Caco-2 (cell line): ENCODE measurements at regions of chr7 and their contacts with region 1.

Region 1: GRCh38 chr7:136000288-136000913 is 23.2 kb upstream of the MTPN start:
- DNase-seq: peak; percentile 52 to 67
- H3K4me3 ChIP-seq: no peak overlapping the region
- H3K4me3 Mint-ChIP-seq: no peak overlapping the region
- H3K27ac Mint-ChIP-seq: peak overlapping the region; percentile 81
- H3K4me1 ChIP-seq: peaks cover 13% of the 10 kb centered on the region
- H3K4me1 Mint-ChIP-seq: peaks cover 10% of the 10 kb centered on the region
- H3K27me3 ChIP-seq: no peaks in the 10 kb centered on the region
- H3K27me3 Mint-ChIP-seq: no peaks in the 10 kb centered on the region
- CTCF ChIP-seq: no peak

Region 2: GRCh38 chr7:135662373-135663114 is 337.9 kb before region 1 on chr7 and contains the start of gene STMP1:
- CTCF ChIA-PET with region 1: no interaction called
- POLR2A ChIA-PET with region 1: no interaction called
- intact Hi-C with region 1: loop called (anchors 5 kb)
- DNase-seq: peak; percentile 96 to 98
- H3K4me3 ChIP-seq: peak within 1 kb of the TSS; percentile 100
- H3K4me3 Mint-ChIP-seq: peak within 1 kb of the TSS; percentile 85
- H3K27ac Mint-ChIP-seq: peak within 1 kb of the TSS; percentile 87
- H3K4me1 ChIP-seq: peaks cover 11% of the 10 kb centered on the region
- H3K4me1 Mint-ChIP-seq: peaks cover 8% of the 10 kb centered on the region
- H3K27me3 ChIP-seq: no peaks in the 10 kb centered on the region
- H3K27me3 Mint-ChIP-seq: no peaks in the 10 kb centered on the region
- CTCF ChIP-seq: peak; percentile 69 to 78
- total RNA-seq, gene STMP1: 19.6 and 21.5 TPM in 2 replicates

Region 3: DNA sequence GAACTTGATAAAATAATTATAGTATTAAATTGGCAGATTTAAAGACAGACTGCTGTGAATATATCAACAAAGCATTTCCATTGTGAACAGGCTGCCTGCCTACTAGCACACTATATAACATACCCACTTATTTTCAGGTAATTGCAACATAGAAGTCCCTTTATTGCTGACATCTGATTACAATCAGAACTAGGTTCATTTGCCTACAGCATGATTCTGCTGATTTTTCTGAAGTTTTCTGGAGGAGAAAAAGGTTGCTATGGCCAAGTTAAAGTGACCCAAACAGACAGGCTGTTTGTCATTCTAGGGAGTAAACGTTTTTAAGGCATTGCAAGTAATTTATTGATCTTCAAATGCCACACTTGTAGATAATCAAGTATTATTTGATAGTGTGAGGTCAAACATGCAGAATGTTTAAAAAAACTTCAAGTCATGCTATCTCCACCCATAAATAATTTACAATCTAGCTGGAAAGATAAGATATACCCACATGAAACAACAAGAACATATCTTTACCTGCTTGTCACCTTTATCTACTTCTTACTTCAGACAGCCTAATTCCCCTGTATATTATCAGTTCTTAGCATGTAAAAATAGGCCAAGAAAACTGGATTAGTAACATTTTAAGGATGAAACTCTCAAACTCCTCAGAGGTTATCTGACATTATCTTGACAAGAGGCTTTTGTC is 63.7 kb before region 1 on chr7:
- CTCF ChIA-PET with region 1: no interaction called
- POLR2A ChIA-PET with region 1: no interaction called
- intact Hi-C with region 1: loop called (anchors 2 kb)
- DNase-seq: peak in 1 of 2 experiments; percentile 54
- H3K4me3 ChIP-seq: no peak overlapping the region
- H3K4me3 Mint-ChIP-seq: peak overlapping the region; percentile 18
- H3K27ac Mint-ChIP-seq: no peak overlapping the region
- H3K4me1 ChIP-seq: peaks cover 52% of the 10 kb centered on the region
- H3K4me1 Mint-ChIP-seq: peaks cover 49% of the 10 kb centered on the region
- H3K27me3 ChIP-seq: no peaks in the 10 kb centered on the region
- H3K27me3 Mint-ChIP-seq: no peaks in the 10 kb centered on the region
- CTCF ChIP-seq: no peak

Region 4: DNA sequence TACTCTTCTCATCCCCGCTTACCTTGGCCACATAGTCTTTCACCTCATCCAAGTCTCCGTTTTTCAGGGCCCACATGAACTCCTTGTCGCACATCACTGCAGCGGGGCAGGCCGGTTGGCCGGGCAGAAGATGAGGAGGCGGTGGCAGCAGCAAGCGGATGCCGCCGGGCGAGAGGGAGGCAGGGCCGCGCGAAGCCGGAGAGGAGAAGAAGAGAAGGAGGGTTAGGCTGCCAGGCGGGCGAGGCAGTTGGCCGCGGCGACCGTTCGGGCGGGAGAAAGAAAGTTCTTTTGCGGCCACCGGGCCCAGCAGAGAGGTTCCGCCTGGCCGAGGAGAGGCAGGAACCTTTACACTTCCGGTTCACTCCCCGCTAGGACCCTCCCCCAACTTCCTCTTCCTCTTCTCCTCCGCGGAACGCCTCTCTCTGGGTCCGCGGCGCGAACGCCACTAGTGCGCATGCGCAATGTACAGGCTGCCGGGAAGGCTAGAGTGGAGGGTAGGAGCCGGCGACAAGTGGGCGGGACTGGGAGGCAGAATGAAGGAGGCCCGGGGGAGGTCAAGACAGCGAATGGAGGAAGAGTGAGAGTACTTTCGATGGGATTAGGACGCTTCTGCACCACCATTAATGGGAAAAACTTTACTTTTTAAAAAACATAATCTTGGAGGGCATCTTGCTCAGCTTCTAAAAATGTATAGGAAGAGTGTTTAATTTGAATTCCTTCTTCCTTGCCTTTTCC is 23.2 kb before region 1 on chr7 and contains the start of gene MTPN:
- CTCF ChIA-PET with region 1: no interaction called
- POLR2A ChIA-PET with region 1: no interaction called
- intact Hi-C with region 1: loop called (anchors 1 kb)
- DNase-seq: peak; percentile 99
- H3K4me3 ChIP-seq: peak within 1 kb of the TSS; percentile 90
- H3K4me3 Mint-ChIP-seq: peak within 1 kb of the TSS; percentile 79
- H3K27ac Mint-ChIP-seq: peak within 1 kb of the TSS; percentile 70
- H3K4me1 ChIP-seq: peaks cover 11% of the 10 kb centered on the region
- H3K4me1 Mint-ChIP-seq: peaks cover 35% of the 10 kb centered on the region
- H3K27me3 ChIP-seq: no peaks in the 10 kb centered on the region
- H3K27me3 Mint-ChIP-seq: no peaks in the 10 kb centered on the region
- CTCF ChIP-seq: no peak
- total RNA-seq, gene MTPN: 136 and 138 TPM in 2 replicates

Region 5: GRCh38 chr7:136174477-136175125 is 174.2 kb after region 1 on chr7:
- CTCF ChIA-PET with region 1: no interaction called
- POLR2A ChIA-PET with region 1: no interaction called
- intact Hi-C with region 1: no loop called
- DNase-seq: no peak
- H3K4me3 ChIP-seq: no peak overlapping the region
- H3K4me3 Mint-ChIP-seq: no peak overlapping the region
- H3K27ac Mint-ChIP-seq: no peak overlapping the region
- H3K4me1 ChIP-seq: no peaks in the 10 kb centered on the region
- H3K4me1 Mint-ChIP-seq: no peaks in the 10 kb centered on the region
- H3K27me3 ChIP-seq: no peaks in the 10 kb centered on the region
- H3K27me3 Mint-ChIP-seq: no peaks in the 10 kb centered on the region
- CTCF ChIP-seq: no peak